ENCODE measurements at regions of chr6 and their contacts with region 1.

Region 1: DNA sequence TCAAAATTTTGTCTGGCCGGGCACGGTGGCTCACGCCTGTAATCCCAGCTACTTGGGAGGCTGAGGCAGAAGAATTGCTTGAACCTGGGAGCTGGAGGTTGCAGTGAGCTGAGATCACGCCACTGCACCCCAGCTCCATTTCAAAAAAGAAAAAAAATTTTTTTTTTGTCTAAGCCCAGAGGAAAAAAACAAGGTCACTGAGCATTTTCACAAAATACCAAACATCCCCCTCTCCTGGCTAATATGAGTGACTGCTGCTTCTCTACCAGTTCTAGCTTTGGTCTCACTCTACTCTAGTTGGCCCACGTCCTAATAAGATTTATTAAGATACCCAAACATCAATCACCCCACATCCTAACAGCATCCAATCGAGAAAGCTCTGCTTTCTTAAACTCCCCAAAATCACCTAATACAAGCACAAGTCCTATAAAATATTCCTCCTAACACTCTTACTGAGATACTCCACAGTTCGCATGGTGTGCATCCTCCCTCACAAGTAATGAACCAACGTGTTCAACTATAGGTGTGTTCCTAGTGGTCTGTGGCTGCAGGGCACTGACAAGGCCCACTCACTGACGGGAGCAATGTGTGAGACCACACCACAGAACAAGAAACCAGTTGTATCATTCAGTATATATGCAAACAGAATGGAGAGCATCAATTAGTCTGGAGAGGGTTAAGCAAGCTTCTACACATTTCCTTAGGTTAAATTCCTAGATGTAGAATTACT is 64.2 kb downstream of the FKBP5 start:
- DNase-seq: no peak
- ATAC-seq: no peak
- H3K4me3 ChIP-seq: no peak overlapping the region
- H3K27ac ChIP-seq: peak overlapping the region in 1 of 2 donors; percentile 28
- H3K4me1 ChIP-seq: no peaks in the 10 kb centered on the region
- H3K27me3 ChIP-seq: no peaks in the 10 kb centered on the region

Region 2: DNA sequence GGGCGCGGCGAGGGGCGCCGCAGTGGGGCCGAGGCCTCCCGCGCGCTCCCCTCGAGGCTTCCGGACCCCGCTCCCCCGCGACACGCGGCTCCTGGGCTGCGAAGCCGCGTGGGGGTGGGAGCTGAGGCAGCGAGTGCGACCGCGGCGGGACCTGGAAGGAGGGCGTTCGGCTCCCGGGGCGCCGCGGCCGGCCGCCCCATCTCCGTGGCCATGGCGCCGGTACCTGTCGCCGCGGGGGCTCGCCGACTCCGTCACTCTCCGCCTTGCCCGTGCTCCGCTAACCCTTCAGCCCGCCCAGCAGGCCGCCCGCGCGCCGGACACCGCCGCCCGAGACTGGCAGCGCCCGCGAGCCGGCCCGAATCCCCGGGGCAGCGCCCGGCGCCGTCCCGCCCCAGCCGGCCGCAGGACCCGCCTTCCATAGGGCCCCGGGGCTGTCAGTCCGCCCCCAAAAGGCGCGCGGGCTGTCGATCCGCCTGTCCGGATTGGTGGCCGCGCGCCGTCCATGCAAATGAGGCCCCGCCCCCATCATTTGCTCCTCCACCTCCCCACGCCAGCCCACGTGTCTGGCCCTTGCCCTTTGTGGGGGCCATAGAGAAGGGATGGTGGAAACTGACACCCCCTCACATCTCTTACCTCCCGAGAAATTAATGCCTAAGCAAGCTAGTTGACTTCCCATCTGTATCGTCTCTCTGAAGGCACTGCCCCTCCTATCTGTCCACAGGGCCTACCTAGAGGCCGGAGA is 64.2 kb after region 1 on chr6 and contains the start of gene FKBP5:
- intact Hi-C with region 1: loop called in 1 of 2 experiments (anchors 10 kb)
- DNase-seq: peak; percentile 96 to 98
- ATAC-seq: peak; percentile 97
- H3K4me3 ChIP-seq: peak within 1 kb of the TSS; percentile 87 to 98
- H3K27ac ChIP-seq: peak within 1 kb of the TSS; percentile 15 to 86
- H3K4me1 ChIP-seq: no peaks in the 10 kb centered on the region
- H3K27me3 ChIP-seq: no peaks in the 10 kb centered on the region
- total RNA-seq, gene FKBP5: 25.1 to 96.1 TPM